Right ventricle myocardium superior (tissue), 1 donor: ENCODE measurements at regions of chr4 and their contacts with region 1.

Region 1: GRCh38 chr4:186725469-186726425 is 2.1 kb upstream of the FAT1 start:
- DNase-seq: peak; percentile 85
- ATAC-seq: peak; percentile 80

Region 2: DNA sequence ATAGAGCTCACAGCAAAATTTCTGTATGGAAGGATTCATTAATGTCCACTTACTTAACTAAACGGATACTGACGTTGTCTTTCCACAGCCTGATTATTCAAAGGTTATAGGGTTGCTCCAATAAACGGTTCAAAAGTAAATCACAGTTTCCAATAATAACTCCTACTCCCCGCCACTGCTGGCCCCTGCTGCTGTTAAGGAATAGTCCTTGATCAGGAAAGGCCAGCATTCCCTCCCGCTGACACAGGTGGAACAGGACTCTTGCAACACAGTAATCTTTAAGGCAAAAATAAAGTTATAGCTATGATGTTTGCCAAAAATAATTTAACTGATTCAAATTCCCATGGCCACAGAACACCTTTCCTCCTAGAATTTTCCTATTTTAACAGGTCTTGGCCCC is 56.0 kb before region 1 on chr4:
- intact Hi-C with region 1: loop called (anchors 5 kb)
- DNase-seq: no peak
- ATAC-seq: peak; percentile 64

Region 3: GRCh38 chr4:186685767-186686183 is 40.0 kb before region 1 on chr4:
- intact Hi-C with region 1: loop called (anchors 5 kb)
- DNase-seq: no peak
- ATAC-seq: peak; percentile 65

Region 4: DNA sequence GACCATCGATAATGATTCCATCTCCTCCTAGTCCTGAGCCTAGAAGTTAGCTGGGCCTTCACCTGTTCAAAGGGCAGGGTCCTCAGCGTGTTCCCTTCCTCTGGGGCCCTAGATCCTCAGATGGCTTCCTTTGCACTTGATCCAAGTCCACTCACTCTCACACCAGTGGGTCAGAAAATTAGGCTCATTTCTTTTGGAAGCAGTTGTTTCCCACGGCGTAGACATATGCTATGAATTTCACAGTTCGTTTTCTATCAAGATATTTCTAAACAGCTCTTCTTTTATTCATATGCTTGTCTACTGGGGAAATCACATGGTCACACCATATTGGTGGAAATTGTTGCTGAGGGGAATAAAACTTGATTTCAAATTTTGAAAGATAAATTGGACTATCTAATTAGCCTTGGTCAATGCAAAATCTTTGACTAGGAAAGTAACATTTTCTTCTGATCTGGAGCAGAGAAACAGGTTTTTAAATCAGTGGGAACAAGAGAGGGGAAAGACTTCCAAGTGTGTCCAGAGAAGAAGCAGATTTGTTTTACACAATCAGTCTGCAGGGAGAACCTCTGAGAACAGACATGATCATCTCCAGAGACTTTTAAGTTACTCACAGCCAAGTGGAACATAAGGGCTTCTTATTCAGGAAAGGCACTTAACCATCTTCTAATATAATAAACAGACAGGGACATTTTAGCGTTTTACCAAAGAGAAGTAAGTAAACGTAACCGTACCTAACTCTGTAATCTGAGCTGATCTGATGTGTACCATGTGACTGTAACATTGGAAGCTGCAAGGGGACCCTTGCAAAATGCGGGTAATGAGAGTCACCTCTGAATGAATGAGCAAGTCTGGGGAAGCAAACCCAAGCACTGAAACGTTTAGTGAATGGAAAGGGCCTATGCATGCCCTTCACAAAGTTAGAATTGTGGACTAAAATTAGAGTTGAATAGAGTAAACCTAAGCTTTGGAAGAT is 453.6 kb after region 1 on chr4:
- intact Hi-C with region 1: loop called (anchors 5 kb)
- DNase-seq: no peak
- ATAC-seq: peak; percentile 58